Activated T-helper 1 cell treated with anti-CD3 and anti-CD28 coated beads, Interleukin-12 subunit alpha, Interleukin-12 subunit beta, Interleukin-2, Interleukin-4 antibody, amounts not matched to agents 30 ng/mL and 10 ng/mL and 1 ng/mL, durations not matched to agents 14 hours and 24 hours and 36 hours (primary cell): ENCODE measurements at regions of chr3 and their contacts with region 1.

Region 1: GRCh38 chr3:151227807-151228665 is 25.0 kb upstream of the GPR171 start:
- DNase-seq: peak; percentile 75
- H3K4me3 Mint-ChIP-seq: peak overlapping the region; percentile 27
- H3K27ac Mint-ChIP-seq: peak overlapping the region; percentile 82
- H3K4me1 Mint-ChIP-seq: peaks cover 61% of the 10 kb centered on the region
- H3K27me3 Mint-ChIP-seq: no peaks in the 10 kb centered on the region

Region 2: DNA sequence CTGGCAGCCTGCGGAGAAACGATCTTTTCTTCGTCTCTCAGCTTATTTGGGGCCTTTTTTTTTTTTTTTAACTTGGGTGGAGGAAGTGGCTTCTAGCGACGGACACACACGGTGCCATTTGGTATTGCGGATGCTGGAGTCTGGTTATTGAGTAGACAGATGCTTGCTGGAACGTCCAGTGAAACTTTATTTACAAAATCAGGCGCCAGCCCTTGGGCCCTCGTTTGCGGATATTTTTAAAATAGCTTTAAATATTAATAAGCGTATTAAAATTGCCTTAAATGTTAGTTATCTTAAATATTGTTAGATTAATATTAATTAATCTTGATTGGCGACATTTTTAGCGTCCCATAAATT is 523.9 kb before region 1 on chr3:
- intact Hi-C with region 1: no loop called
- DNase-seq: no peak
- H3K4me3 Mint-ChIP-seq: peak overlapping the region; percentile 93
- H3K27ac Mint-ChIP-seq: peak overlapping the region; percentile 99
- H3K4me1 Mint-ChIP-seq: peaks cover 23% of the 10 kb centered on the region
- H3K27me3 Mint-ChIP-seq: no peaks in the 10 kb centered on the region

Region 3: GRCh38 chr3:151168269-151169094 is 59.6 kb before region 1 on chr3:
- intact Hi-C with region 1: loop called (anchors 1 kb)
- DNase-seq: peak; percentile 66
- H3K4me3 Mint-ChIP-seq: no peak overlapping the region
- H3K27ac Mint-ChIP-seq: no peak overlapping the region
- H3K4me1 Mint-ChIP-seq: peaks cover 46% of the 10 kb centered on the region
- H3K27me3 Mint-ChIP-seq: peaks cover 3% of the 10 kb centered on the region

Region 4: GRCh38 chr3:151210676-151211381 is 17.2 kb before region 1 on chr3:
- intact Hi-C with region 1: loop called (anchors 1 kb)
- DNase-seq: no peak
- H3K4me3 Mint-ChIP-seq: peak overlapping the region; percentile 48
- H3K27ac Mint-ChIP-seq: peak overlapping the region; percentile 80
- H3K4me1 Mint-ChIP-seq: peaks cover 65% of the 10 kb centered on the region
- H3K27me3 Mint-ChIP-seq: no peaks in the 10 kb centered on the region

Region 5: GRCh38 chr3:151265866-151266265 is 37.8 kb after region 1 on chr3:
- intact Hi-C with region 1: loop called (anchors 1 kb)
- DNase-seq: no peak
- H3K4me3 Mint-ChIP-seq: no peak overlapping the region
- H3K27ac Mint-ChIP-seq: no peak overlapping the region
- H3K4me1 Mint-ChIP-seq: peaks cover 66% of the 10 kb centered on the region
- H3K27me3 Mint-ChIP-seq: peaks cover 5% of the 10 kb centered on the region

Region 6: GRCh38 chr3:151327571-151328198 is 99.6 kb after region 1 on chr3:
- intact Hi-C with region 1: loop called (anchors 1 kb)
- DNase-seq: no peak
- H3K4me3 Mint-ChIP-seq: no peak overlapping the region
- H3K27ac Mint-ChIP-seq: no peak overlapping the region
- H3K4me1 Mint-ChIP-seq: peaks cover 8% of the 10 kb centered on the region
- H3K27me3 Mint-ChIP-seq: peaks cover 12% of the 10 kb centered on the region

Region 7: DNA sequence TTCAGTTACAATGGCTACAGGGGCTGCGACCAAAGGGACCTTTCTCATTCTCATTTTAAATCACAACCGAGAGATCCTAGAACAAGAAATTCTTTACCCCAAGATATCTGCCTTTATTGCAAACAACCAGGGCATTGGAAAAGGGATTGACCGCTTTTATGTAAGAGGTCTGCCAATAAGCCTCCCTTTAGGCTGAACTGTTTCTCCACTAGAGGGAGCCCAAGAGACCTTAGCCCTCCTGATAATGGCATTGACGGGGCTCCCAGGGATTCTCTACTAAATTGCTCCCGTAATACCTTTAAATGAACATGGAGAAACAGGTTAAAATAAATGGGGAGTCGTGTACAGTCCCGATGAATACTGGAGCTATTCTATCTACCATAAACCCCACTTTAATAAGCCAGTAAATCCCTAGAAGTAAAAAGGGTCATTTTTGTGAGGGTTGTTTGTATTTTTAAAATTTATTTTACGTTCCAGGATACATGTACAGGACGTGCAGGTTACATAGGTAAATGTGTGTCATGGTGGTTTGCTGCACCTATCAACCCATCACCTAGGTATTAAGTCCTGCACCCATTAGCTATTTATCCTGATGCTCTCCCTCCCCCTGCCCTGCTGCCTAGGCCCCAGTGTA is 240.4 kb after region 1 on chr3:
- intact Hi-C with region 1: loop called (anchors 2 kb)
- DNase-seq: peak; percentile 6
- H3K4me3 Mint-ChIP-seq: no peak overlapping the region
- H3K27ac Mint-ChIP-seq: no peak overlapping the region
- H3K4me1 Mint-ChIP-seq: no peaks in the 10 kb centered on the region
- H3K27me3 Mint-ChIP-seq: peaks cover 9% of the 10 kb centered on the region

Region 8: DNA sequence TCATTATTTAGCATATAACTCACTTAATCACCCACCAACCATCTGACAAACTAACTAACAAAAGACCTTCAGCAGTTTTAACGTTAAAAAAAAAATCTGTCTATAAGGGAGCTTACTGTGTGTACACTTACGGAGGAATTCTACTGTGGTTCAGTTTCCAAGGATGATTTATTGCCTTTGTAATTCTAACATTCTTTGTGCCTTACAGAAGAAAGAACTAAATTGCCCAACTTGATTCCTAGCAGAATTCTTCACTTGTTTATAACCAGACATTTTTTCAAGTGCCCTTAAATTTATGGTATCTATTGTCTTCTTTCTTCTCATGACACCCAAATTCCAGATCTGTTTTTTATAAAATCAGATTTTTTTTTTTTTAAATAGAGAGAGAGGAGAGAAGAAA is 352.6 kb after region 1 on chr3:
- intact Hi-C with region 1: no loop called
- DNase-seq: no peak
- H3K4me3 Mint-ChIP-seq: no peak overlapping the region
- H3K27ac Mint-ChIP-seq: no peak overlapping the region
- H3K4me1 Mint-ChIP-seq: no peaks in the 10 kb centered on the region
- H3K27me3 Mint-ChIP-seq: peaks cover 4% of the 10 kb centered on the region